Activated CD4-positive, alpha-beta T cell treated with anti-CD3 and anti-CD28 coated beads for 36 hours (primary cell): ENCODE measurements at regions of chr3 and their contacts with region 1.

Region 1: DNA sequence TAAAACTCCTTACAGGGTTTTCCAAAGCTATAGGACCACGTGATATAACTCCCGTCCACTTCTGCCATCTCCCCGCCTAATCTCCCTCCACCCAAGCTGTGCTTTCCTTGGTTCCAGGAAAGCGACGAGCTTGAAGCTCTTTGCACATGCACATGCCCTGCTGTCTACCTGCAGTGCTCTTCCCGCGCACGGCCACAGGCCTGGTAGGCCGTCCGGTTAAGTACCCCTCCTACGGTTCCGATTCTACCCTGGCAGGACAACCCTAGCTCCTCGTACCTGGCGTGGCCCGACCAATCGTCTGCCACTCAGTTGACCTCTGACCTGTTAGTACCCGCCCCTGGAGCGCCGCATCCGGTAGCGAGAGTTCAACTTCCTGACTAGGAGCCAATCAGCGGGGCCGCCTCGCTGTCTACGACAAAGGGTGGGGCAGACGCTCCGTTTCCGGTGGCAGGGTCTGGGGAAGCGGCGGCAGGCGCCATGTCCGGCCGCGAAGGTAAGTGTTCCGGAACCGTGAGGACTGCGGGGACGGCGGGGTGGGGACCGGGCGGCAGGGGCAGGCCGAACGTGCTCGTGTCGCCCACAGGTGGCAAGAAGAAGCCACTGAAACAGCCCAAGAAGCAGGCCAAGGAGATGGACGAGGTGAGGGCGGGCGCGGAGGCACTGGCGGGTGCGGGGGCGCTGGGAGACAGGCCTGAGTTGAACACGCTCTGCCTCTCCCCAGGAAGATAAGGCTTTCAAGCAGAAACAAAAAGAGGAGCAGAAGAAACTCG is at the starts of genes CCDC51 and TMA7:
- DNase-seq: peak; percentile 99
- ATAC-seq: peak; percentile 97
- H3K4me3 Mint-ChIP-seq: peak within 1 kb of the TSS; percentile 92
- H3K27ac Mint-ChIP-seq: peak within 1 kb of the TSS; percentile 98
- H3K4me1 Mint-ChIP-seq: peaks cover 29% of the 10 kb centered on the region
- H3K27me3 Mint-ChIP-seq: no peaks in the 10 kb centered on the region
- total RNA-seq, gene CCDC51: 17.5 to 25.0 TPM
- total RNA-seq, gene TMA7: 260 to 324 TPM

Region 2: GRCh38 chr3:46882377-46883053 is 1557.5 kb before region 1 on chr3:
- CTCF ChIA-PET with region 1: no interaction called
- POLR2A ChIA-PET with region 1: no interaction called
- intact Hi-C with region 1: no loop called
- DNase-seq: no peak
- ATAC-seq: no peak
- H3K4me3 Mint-ChIP-seq: peak overlapping the region; percentile 49
- H3K27ac Mint-ChIP-seq: no peak overlapping the region
- H3K4me1 Mint-ChIP-seq: no peaks in the 10 kb centered on the region
- H3K27me3 Mint-ChIP-seq: peaks cover 33% of the 10 kb centered on the region

Region 3: GRCh38 chr3:48194446-48195071 is 245.4 kb before region 1 on chr3:
- CTCF ChIA-PET with region 1: interaction called, 25 read pairs
- POLR2A ChIA-PET with region 1: no interaction called
- intact Hi-C with region 1: loop called (anchors 1 to 2 kb)
- DNase-seq: peak; percentile 56
- ATAC-seq: peak; percentile 49
- H3K4me3 Mint-ChIP-seq: no peak overlapping the region
- H3K27ac Mint-ChIP-seq: no peak overlapping the region
- H3K4me1 Mint-ChIP-seq: no peaks in the 10 kb centered on the region
- H3K27me3 Mint-ChIP-seq: peaks cover 4% of the 10 kb centered on the region

Region 4: DNA sequence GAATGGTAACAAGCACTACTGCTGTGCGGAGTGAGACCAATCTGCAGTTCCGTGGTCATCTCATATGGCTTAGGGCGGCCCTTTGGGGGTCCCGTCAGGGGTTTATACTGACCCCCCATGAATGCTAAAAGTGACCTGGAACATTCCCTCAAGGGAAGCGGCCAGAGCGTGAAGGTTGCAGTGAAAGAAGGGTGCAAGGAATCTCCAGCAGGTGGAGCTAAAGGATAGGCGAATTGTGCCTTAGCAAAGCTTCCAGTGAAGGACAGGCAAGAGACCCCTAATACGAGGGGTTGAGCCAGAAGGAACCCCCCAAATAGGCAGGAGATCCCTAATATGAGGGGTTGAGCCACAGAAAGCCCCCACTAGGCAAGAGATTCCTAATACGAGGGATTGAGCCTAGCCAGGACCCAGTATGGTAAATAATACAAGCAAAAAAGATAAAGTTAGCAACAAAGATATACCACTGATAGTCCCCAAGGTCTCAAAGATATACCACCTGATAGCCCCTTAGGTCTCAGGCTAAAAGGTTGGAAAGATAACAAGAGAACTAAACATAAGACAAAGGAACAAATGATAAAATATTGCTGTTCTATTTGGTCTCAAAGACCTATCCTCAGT is 166.3 kb before region 1 on chr3:
- CTCF ChIA-PET with region 1: interaction called, 77 read pairs
- POLR2A ChIA-PET with region 1: interaction called, 4 read pairs
- intact Hi-C with region 1: loop called (anchors 1 kb)
- DNase-seq: peak; percentile 68
- ATAC-seq: no peak
- H3K4me3 Mint-ChIP-seq: no peak overlapping the region
- H3K27ac Mint-ChIP-seq: no peak overlapping the region
- H3K4me1 Mint-ChIP-seq: peaks cover 22% of the 10 kb centered on the region
- H3K27me3 Mint-ChIP-seq: no peaks in the 10 kb centered on the region

Region 5: GRCh38 chr3:48400824-48401433 is 39.1 kb before region 1 on chr3:
- CTCF ChIA-PET with region 1: interaction called, 165 read pairs
- POLR2A ChIA-PET with region 1: interaction called, 4 read pairs
- intact Hi-C with region 1: loop called (anchors 1 kb)
- DNase-seq: peak; percentile 76
- ATAC-seq: peak; percentile 84
- H3K4me3 Mint-ChIP-seq: no peak overlapping the region
- H3K27ac Mint-ChIP-seq: peak overlapping the region; percentile 31
- H3K4me1 Mint-ChIP-seq: no peaks in the 10 kb centered on the region
- H3K27me3 Mint-ChIP-seq: no peaks in the 10 kb centered on the region

Region 6: GRCh38 chr3:48459773-48460516 is 19.9 kb after region 1 on chr3:
- CTCF ChIA-PET with region 1: interaction called, 10 read pairs
- POLR2A ChIA-PET with region 1: no interaction called
- intact Hi-C with region 1: no loop called
- DNase-seq: no peak
- ATAC-seq: no peak
- H3K4me3 Mint-ChIP-seq: no peak overlapping the region
- H3K27ac Mint-ChIP-seq: no peak overlapping the region
- H3K4me1 Mint-ChIP-seq: no peaks in the 10 kb centered on the region
- H3K27me3 Mint-ChIP-seq: no peaks in the 10 kb centered on the region

Region 7: DNA sequence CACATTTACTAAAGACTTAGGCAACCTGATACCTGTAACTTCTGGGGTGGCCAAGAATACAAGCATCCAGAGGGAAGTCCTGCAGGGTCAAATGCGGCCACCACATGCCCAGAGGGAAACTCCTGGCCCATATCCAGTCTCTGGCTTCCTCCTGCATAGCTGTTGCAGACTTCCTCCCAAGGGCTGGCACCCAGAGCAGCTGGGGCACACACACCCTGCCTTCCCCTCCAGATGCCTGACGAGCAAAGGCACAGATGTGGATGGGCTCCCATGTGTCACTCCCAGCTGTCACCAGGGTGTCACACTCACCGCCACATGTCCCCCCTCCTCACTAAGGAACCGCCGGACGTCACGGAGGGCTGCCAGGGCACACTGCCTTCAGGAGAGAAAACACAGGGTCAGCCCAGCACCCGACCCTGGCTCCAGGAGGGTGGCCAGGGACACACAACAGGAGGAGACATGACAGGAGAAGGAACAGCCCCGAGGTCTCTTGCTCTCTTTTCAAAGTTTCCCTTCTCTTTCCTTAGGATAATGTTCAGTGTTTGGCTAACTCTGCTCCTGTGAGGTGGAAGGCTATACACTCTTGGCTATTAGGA is 103.4 kb after region 1 on chr3:
- CTCF ChIA-PET with region 1: interaction called, 29 read pairs
- POLR2A ChIA-PET with region 1: no interaction called
- intact Hi-C with region 1: no loop called
- DNase-seq: no peak
- ATAC-seq: no peak
- H3K4me3 Mint-ChIP-seq: no peak overlapping the region
- H3K27ac Mint-ChIP-seq: no peak overlapping the region
- H3K4me1 Mint-ChIP-seq: peaks cover 4% of the 10 kb centered on the region
- H3K27me3 Mint-ChIP-seq: no peaks in the 10 kb centered on the region

Region 8: GRCh38 chr3:48765376-48765775 is 325.4 kb after region 1 on chr3:
- CTCF ChIA-PET with region 1: no interaction called
- POLR2A ChIA-PET with region 1: no interaction called
- intact Hi-C with region 1: no loop called
- DNase-seq: no peak
- ATAC-seq: no peak
- H3K4me3 Mint-ChIP-seq: no peak overlapping the region
- H3K27ac Mint-ChIP-seq: no peak overlapping the region
- H3K4me1 Mint-ChIP-seq: no peaks in the 10 kb centered on the region
- H3K27me3 Mint-ChIP-seq: no peaks in the 10 kb centered on the region

Region 9: DNA sequence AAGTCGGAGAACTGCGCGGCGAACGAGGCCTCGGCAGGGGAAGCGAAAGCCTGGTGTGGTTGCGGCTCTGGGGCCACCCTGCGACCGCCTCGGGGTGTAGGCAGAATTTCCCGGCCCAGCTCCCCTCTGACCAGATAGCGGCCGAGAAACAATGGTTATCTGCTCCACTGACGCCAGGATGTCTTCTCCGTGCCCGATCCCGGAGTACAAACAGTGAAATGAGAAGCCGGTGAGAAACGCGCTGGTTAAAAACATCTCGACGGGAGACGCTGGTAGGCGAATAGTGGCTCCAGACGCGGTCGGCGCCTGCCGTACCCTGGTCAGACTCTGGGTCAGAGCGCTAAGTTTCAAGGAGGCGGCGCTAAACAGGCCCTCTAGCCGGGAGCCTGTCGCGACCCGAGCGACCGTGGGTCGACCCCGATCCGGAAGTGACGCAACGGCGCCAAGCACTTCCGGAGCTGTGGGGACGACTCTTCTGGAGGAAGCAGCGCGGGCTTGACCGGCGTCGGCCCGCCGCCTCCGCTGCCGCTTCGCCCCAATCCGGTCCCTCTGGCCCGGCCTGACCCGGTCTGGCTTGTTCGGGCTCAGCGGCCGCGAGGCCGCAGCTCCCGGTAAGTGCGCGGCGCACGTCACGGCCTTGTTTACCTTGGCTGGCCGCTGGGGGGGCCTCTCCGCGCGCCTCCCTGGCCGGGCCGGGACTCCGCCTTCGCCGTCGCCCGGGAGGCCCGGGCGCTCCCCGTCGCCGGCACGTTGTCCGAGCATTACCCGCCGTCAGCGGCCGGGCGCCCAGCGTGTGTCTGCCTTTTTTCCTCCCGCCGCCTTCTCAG is 478.6 kb after region 1 on chr3 and contains the start of gene ARIH2:
- CTCF ChIA-PET with region 1: no interaction called
- POLR2A ChIA-PET with region 1: no interaction called
- intact Hi-C with region 1: loop called in 1 of 2 experiments (anchors 2 kb)
- DNase-seq: peak; percentile 94
- ATAC-seq: peak; percentile 75
- H3K4me3 Mint-ChIP-seq: peak within 1 kb of the TSS; percentile 90
- H3K27ac Mint-ChIP-seq: peak within 1 kb of the TSS; percentile 100
- H3K4me1 Mint-ChIP-seq: peaks cover 30% of the 10 kb centered on the region
- H3K27me3 Mint-ChIP-seq: no peaks in the 10 kb centered on the region
- total RNA-seq, gene ARIH2: 105 to 112 TPM

Region 10: DNA sequence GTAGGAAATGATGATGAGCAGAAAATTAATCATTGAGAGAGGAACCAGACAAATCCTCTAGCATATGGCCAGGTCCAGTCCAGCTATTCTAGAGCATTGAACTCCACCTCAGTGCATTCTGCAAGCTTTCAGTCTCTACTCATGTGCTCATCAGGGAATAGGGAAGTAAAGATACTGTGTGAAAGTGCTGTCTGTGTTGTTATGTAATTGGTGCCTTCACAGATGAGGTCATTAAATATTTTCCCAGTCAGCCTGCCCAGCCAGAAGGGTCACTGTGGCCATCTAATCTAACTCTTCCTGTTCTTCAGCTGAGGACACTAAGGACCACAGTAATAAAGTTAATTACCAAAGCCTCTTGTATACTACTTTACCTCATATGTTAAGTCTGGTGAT is 808.8 kb after region 1 on chr3:
- CTCF ChIA-PET with region 1: no interaction called
- POLR2A ChIA-PET with region 1: no interaction called
- intact Hi-C with region 1: no loop called
- DNase-seq: no peak
- ATAC-seq: no peak
- H3K4me3 Mint-ChIP-seq: no peak overlapping the region
- H3K27ac Mint-ChIP-seq: no peak overlapping the region
- H3K4me1 Mint-ChIP-seq: no peaks in the 10 kb centered on the region
- H3K27me3 Mint-ChIP-seq: no peaks in the 10 kb centered on the region